GM12878 (cell line): ENCODE measurements at regions of chr4 and their contacts with region 1.

Region 1: DNA sequence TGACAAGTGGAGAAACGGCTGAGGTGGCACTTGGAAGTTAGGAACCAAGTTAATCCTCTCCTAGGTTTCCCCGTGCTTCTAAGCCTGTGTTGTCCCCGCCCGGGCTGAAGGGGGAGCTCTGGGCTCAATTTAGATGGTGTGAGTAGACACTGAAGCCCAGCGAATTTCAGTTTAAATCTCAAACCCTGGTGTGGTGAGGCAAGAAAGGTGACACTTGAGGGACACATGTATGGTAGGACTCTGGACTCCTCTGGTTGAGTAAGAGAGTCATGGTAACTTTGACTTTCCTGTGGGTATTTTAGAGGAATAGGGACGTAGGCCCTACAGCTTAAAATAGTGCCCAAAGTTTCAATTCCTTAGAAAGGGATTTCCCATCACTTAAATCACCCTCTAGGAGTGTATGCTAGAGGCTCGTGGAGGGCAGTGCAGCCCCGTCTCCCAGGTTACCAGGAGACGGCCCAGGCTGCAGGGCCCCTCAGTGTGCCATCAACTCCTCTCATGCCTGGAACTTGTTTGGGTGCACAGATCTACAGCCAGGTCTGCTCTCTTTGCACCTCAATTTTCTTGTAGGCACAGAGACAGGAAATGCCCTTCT is 24.0 kb downstream of the HAND2 start:
- DNase-seq: peak; percentile 41
- ATAC-seq: peak; percentile 91
- H3K4me3 ChIP-seq: no peak overlapping the region
- H3K27ac ChIP-seq: no peak overlapping the region
- H3K4me1 ChIP-seq: peaks cover 14% of the 10 kb centered on the region
- H3K27me3 ChIP-seq: peaks cover 6 to 22% of the 10 kb centered on the region in 2 experiments
- CTCF ChIP-seq: peak; percentile 72 to 79 (median 73)
- EP300 ChIP-seq: no peak
- POLR2A ChIP-seq: no peak
- RAD21 ChIP-seq: peak; percentile 84

Region 2: GRCh38 chr4:173436149-173436579 is 69.9 kb before region 1 on chr4:
- CTCF ChIA-PET with region 1: no interaction called
- POLR2A ChIA-PET with region 1: no interaction called
- RAD21 ChIA-PET with region 1: no interaction called
- SMC1A ChIA-PET with region 1: no interaction called
- in situ Hi-C with region 1: no loop called
- intact Hi-C with region 1: no loop called
- DNase-seq: no peak
- ATAC-seq: no peak
- H3K4me3 ChIP-seq: no peak overlapping the region
- H3K27ac ChIP-seq: no peak overlapping the region
- H3K4me1 ChIP-seq: no peaks in the 10 kb centered on the region
- H3K27me3 ChIP-seq: no peaks in the 10 kb centered on the region
- CTCF ChIP-seq: no peak
- EP300 ChIP-seq: no peak
- POLR2A ChIP-seq: no peak
- RAD21 ChIP-seq: no peak

Region 3: DNA sequence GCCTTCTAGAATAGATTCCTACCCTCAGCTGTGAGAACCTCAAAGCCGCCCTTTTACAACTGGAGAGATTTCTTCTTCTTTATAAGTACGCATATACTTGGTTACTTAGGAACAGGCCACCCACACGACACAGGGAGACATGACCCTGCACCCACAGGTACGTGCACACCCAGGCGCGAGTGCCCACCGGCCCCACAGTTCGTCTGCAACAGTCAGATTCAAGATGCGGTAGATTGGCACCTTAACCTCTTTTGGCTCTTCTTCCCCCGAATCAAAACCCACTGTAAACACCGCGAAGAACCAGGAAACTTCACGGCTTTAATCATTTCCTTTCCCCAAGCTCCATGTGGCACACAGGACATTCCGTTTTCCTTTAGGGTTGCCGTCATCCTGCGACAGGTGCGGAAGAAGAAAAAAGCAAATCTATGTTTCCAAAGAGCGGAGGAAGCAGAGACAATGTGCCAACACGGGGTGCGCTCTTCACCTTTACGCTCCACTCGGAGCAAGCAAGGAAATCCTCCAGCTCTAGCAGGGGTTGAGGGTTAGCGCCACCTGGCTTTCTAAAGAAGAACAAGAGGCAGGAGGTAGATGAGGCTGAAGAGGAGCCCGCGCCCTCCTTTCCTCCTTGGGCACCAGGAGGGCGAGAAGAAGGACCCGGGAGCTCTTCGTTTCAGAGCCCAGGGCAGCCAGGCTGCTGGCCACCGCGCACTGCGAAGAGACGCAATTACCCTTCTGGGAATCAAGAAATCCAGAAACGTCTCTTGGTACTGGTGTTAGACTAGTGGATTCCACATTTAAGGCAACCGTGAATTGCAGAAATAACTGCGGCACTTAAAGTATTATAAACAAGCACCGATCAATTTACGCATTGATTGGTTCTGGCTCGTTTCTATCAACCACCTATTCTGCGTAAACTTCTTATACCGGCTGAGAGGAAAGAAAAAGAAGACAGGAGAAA is 11.7 kb before region 1 on chr4:
- CTCF ChIA-PET with region 1: interaction called, 16 read pairs
- POLR2A ChIA-PET with region 1: no interaction called
- RAD21 ChIA-PET with region 1: no interaction called
- SMC1A ChIA-PET with region 1: interaction called, 3 read pairs
- in situ Hi-C with region 1: no loop called
- intact Hi-C with region 1: no loop called
- DNase-seq: peak; percentile 27
- ATAC-seq: peak; percentile 99
- H3K4me3 ChIP-seq: peak overlapping the region; percentile 70; the same call in 1 of the 2 replicates
- H3K27ac ChIP-seq: no peak overlapping the region
- H3K4me1 ChIP-seq: peaks cover 4% of the 10 kb centered on the region
- H3K27me3 ChIP-seq: no peaks in the 10 kb centered on the region
- CTCF ChIP-seq: peak; percentile 78 to 91 (median 82)
- EP300 ChIP-seq: no peak
- POLR2A ChIP-seq: no peak
- RAD21 ChIP-seq: peak; percentile 83

Region 4: GRCh38 chr4:173522123-173522950 is 16.3 kb after region 1 on chr4:
- CTCF ChIA-PET with region 1: no interaction called
- POLR2A ChIA-PET with region 1: no interaction called
- RAD21 ChIA-PET with region 1: no interaction called
- SMC1A ChIA-PET with region 1: no interaction called
- in situ Hi-C with region 1: no loop called
- intact Hi-C with region 1: no loop called
- DNase-seq: no peak
- ATAC-seq: no peak
- H3K4me3 ChIP-seq: no peak overlapping the region
- H3K27ac ChIP-seq: no peak overlapping the region
- H3K4me1 ChIP-seq: no peaks in the 10 kb centered on the region
- H3K27me3 ChIP-seq: peaks cover 10 to 38% of the 10 kb centered on the region in 2 experiments
- CTCF ChIP-seq: no peak
- EP300 ChIP-seq: no peak
- POLR2A ChIP-seq: no peak
- RAD21 ChIP-seq: no peak

Region 5: DNA sequence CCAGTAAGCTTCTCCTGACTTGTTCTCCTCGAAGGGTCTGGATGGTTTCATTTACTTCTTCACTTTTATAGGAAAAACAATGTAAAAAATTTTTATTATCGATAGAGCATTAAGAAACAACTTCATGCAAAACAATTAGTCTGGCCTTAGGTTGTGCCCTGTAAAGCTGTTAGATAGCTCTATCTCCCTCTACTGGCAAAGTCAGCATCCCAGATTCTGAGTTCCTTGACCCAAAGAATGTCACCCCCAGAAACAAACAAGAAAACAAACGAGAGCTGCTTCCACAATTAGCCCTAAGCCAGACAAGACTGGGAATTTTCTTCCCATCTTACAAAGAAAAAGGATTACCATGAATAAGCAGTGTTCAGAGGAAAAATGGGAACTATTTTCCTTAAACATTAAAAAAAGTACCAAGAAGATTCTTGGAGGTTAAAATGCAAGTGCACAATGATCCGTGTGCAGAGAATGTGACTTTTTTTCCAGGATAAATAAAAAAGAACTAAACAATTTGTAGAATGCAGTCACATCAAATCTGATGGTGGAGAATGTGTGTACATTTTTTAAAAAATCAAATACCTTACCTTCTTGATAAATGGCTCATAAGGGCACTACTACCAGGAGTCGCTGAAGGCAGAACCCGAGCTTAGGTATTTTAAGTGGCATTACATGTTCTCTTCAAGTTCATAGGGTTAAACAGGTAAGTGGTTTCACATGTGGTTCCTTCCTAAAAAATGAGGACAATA is 484.3 kb after region 1 on chr4:
- CTCF ChIA-PET with region 1: interaction called, 3 read pairs
- POLR2A ChIA-PET with region 1: no interaction called
- RAD21 ChIA-PET with region 1: no interaction called
- SMC1A ChIA-PET with region 1: no interaction called
- in situ Hi-C with region 1: no loop called
- intact Hi-C with region 1: loop called (anchors 5 kb)
- DNase-seq: no peak
- ATAC-seq: peak; percentile 54; the same call in 2 of the 3 replicates
- H3K4me3 ChIP-seq: no peak overlapping the region
- H3K27ac ChIP-seq: no peak overlapping the region
- H3K4me1 ChIP-seq: no peaks in the 10 kb centered on the region
- H3K27me3 ChIP-seq: no peaks in the 10 kb centered on the region
- CTCF ChIP-seq: peak; percentile 27 to 34 (median 29); a peak in 4 of 6 replicates
- EP300 ChIP-seq: no peak
- POLR2A ChIP-seq: no peak
- RAD21 ChIP-seq: 0 out of 2 replicates have a peak, but pooled peaks have one; percentile 22

Region 6: GRCh38 chr4:174120446-174121295 is 614.6 kb after region 1 on chr4:
- CTCF ChIA-PET with region 1: interaction called, 3 read pairs
- POLR2A ChIA-PET with region 1: no interaction called
- RAD21 ChIA-PET with region 1: interaction called, 3 read pairs
- SMC1A ChIA-PET with region 1: no interaction called
- in situ Hi-C with region 1: no loop called
- intact Hi-C with region 1: loop called (anchors 1 kb)
- DNase-seq: no peak
- ATAC-seq: peak; percentile 63
- H3K4me3 ChIP-seq: no peak overlapping the region
- H3K27ac ChIP-seq: no peak overlapping the region
- H3K4me1 ChIP-seq: no peaks in the 10 kb centered on the region
- H3K27me3 ChIP-seq: no peaks in the 10 kb centered on the region; a peak in 1 of 4 replicates
- CTCF ChIP-seq: peak; percentile 44 to 52 (median 48); a peak in 5 of 6 replicates
- EP300 ChIP-seq: no peak
- POLR2A ChIP-seq: no peak
- RAD21 ChIP-seq: 0 out of 2 replicates have a peak, but pooled peaks have one; percentile 24

Region 7: GRCh38 chr4:174156239-174156826 is 650.3 kb after region 1 on chr4:
- CTCF ChIA-PET with region 1: interaction called, 3 read pairs
- POLR2A ChIA-PET with region 1: no interaction called
- RAD21 ChIA-PET with region 1: no interaction called
- SMC1A ChIA-PET with region 1: no interaction called
- in situ Hi-C with region 1: no loop called
- intact Hi-C with region 1: loop called (anchors 1 kb)
- DNase-seq: peak; percentile 4
- ATAC-seq: peak; percentile 91
- H3K4me3 ChIP-seq: no peak overlapping the region
- H3K27ac ChIP-seq: no peak overlapping the region
- H3K4me1 ChIP-seq: no peaks in the 10 kb centered on the region
- H3K27me3 ChIP-seq: no peaks in the 10 kb centered on the region; a peak in 1 of 4 replicates
- CTCF ChIP-seq: peak; percentile 59 to 62 (median 61)
- EP300 ChIP-seq: no peak
- POLR2A ChIP-seq: no peak
- RAD21 ChIP-seq: peak; percentile 56

Region 8: GRCh38 chr4:174318829-174319764 is 813.1 kb after region 1 on chr4:
- CTCF ChIA-PET with region 1: interaction called, 8 read pairs
- POLR2A ChIA-PET with region 1: no interaction called
- RAD21 ChIA-PET with region 1: no interaction called
- SMC1A ChIA-PET with region 1: no interaction called
- in situ Hi-C with region 1: loop called (anchors 25 kb)
- intact Hi-C with region 1: no loop called
- DNase-seq: no peak
- ATAC-seq: peak; percentile 55
- H3K4me3 ChIP-seq: no peak overlapping the region
- H3K27ac ChIP-seq: no peak overlapping the region
- H3K4me1 ChIP-seq: no peaks in the 10 kb centered on the region
- H3K27me3 ChIP-seq: no peaks in the 10 kb centered on the region
- CTCF ChIP-seq: peak; percentile 42 to 67 (median 46); a peak in 5 of 6 replicates
- EP300 ChIP-seq: no peak
- POLR2A ChIP-seq: no peak
- RAD21 ChIP-seq: peak; percentile 76